ENCODE measurements at regions of chr5 and their contacts with region 1.

Region 1: GRCh38 chr5:61467766-61468482 is 135.9 kb downstream of the ZSWIM6 start:
- DNase-seq: no peak
- H3K4me3 ChIP-seq: no peak overlapping the region
- H3K27ac ChIP-seq: no peak overlapping the region
- H3K4me1 ChIP-seq: peaks cover 2 to 11% of the 10 kb centered on the region in 2 donors
- H3K27me3 ChIP-seq: no peaks in the 10 kb centered on the region
- CTCF ChIP-seq: no peak

Region 2: GRCh38 chr5:61501971-61502370 is 34.0 kb after region 1 on chr5:
- intact Hi-C with region 1: loop called (anchors 2 kb)
- DNase-seq: no peak
- H3K4me3 ChIP-seq: no peak overlapping the region
- H3K27ac ChIP-seq: no peak overlapping the region
- H3K4me1 ChIP-seq: no peaks in the 10 kb centered on the region
- H3K27me3 ChIP-seq: no peaks in the 10 kb centered on the region
- CTCF ChIP-seq: no peak

Measured in ascending aorta (tissue), 2 donors.